ENCODE measurements at regions of chr6 and their contacts with region 1.

Region 1: DNA sequence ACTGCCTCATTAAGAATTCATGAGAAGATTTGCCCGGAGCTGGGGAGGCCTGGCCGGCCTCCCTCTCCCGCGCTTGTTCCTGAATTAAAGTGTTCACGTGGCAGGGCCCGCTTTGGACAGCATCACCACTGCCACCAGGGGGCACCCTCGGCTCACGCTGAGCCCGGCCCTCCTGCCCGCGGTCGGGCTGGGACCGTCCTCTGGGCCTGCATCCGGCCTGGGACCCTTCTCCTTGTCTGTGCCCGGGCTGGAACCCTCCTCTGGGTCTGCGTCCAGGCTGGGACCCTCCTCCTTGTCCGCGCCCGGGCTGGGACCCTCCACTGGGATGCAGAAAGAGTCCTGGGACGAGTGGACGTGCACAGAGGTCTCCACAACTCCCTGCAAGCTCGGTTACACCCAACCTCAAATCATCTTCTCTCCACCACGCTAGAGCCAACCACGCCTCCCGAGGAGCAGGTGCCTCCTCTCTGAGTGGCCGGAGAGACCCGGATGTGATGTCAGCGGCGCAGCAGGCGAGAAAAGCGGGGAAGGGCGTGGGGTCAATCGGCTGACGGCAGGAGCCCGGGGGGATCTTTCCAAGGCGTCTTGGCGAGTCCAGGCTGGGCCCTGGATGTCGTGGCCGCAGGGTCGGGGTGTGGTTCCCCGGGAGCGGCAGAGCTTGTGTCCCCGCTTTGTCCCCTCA is 50.9 kb upstream of the DACT2 start:
- DNase-seq: peak; percentile 77 to 85
- ATAC-seq: peak; percentile 77 to 88 (median 80)
- H3K4me3 ChIP-seq: no peak overlapping the region
- H3K27ac ChIP-seq: no peak overlapping the region
- H3K4me1 ChIP-seq: no peaks in the 10 kb centered on the region
- H3K27me3 ChIP-seq: peaks cover 0 to 5% (median 3%) of the 10 kb centered on the region in 3 donors
- CTCF ChIP-seq: peak; percentile 67

Region 2: GRCh38 chr6:168616816-168617765 is 246.6 kb after region 1 on chr6:
- intact Hi-C with region 1: loop called in 1 of 2 experiments (anchors 10 kb)
- DNase-seq: no peak
- ATAC-seq: peak in 1 of 4 donors; percentile 29
- H3K4me3 ChIP-seq: no peak overlapping the region
- H3K27ac ChIP-seq: no peak overlapping the region
- H3K4me1 ChIP-seq: no peaks in the 10 kb centered on the region
- H3K27me3 ChIP-seq: peaks cover 0 to 2% (median 0%) of the 10 kb centered on the region in 3 donors
- CTCF ChIP-seq: peak; percentile 10

Region 3: GRCh38 chr6:168884646-168885086 is 514.2 kb after region 1 on chr6:
- intact Hi-C with region 1: loop called (anchors 1 to 2 kb)
- DNase-seq: peak; percentile 70 to 83
- ATAC-seq: peak; percentile 77 to 94 (median 82)
- H3K4me3 ChIP-seq: peak overlapping the region; percentile 51
- H3K27ac ChIP-seq: no peak overlapping the region
- H3K4me1 ChIP-seq: no peaks in the 10 kb centered on the region
- H3K27me3 ChIP-seq: peaks cover 0 to 5% (median 2%) of the 10 kb centered on the region in 3 donors
- CTCF ChIP-seq: peak; percentile 91

Measured in psoas muscle (tissue), 8 donors.